ENCODE measurements at regions of chr15 and their contacts with region 1.

Region 1: DNA sequence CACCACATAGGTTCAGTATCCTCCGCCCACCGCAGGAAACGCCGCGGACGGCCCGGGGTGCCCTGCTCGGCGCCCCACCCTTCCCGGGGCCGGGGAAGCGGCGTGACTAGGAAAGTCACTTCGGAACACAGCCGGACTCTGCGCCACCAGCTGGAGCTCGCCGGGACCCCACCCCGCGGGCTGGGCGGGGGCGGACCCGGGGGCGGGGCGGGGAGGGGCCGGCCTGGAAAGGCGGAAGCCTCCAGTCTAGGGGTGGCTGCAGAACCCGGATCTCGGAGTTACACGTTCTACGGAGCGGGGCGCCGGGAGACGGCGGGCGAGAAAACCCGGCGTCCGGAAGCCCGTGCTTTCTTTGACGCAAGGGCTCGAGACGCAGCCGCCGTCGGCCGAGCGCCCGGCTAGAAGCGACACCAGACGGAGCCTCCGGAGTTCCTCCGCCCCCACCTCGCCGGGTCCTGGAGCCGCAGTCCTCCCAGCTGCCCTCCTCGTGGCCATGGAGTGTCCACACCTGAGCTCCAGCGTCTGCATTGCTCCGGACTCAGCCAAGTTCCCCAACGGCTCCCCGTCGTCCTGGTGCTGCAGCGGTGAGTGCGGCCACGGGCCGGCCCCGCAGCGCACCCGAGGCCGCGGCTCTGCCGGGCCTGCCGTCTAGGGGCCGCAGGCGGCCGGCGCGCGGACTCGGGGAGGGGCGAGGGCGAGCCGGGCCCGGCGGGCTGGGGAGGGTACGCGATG is at the start of gene USP3:
- DNase-seq: peak; percentile 86 to 98
- H3K4me3 ChIP-seq: peak within 1 kb of the TSS; percentile 93 to 94
- H3K27ac ChIP-seq: peak within 1 kb of the TSS; percentile 98 to 99
- H3K4me1 ChIP-seq: peaks cover 6 to 55% of the 10 kb centered on the region in 2 donors
- H3K27me3 ChIP-seq: no peaks in the 10 kb centered on the region
- CTCF ChIP-seq: peak; percentile 56 to 63 (median 60)
- total RNA-seq, gene USP3: 61.9 TPM

Region 2: GRCh38 chr15:63288778-63289378 is 215.5 kb before region 1 on chr15:
- intact Hi-C with region 1: loop called (anchors 5 kb)
- DNase-seq: no peak
- H3K4me3 ChIP-seq: no peak overlapping the region
- H3K27ac ChIP-seq: no peak overlapping the region
- H3K4me1 ChIP-seq: peaks cover 5 to 17% of the 10 kb centered on the region in 2 donors
- H3K27me3 ChIP-seq: no peaks in the 10 kb centered on the region
- CTCF ChIP-seq: peak; percentile 56 to 74 (median 65)

Region 3: GRCh38 chr15:63466378-63467192 is 37.8 kb before region 1 on chr15:
- intact Hi-C with region 1: no loop called
- DNase-seq: peak in 1 of 2 donors; percentile 58
- H3K4me3 ChIP-seq: no peak overlapping the region
- H3K27ac ChIP-seq: no peak overlapping the region
- H3K4me1 ChIP-seq: peaks cover 0 to 5% of the 10 kb centered on the region in 2 donors
- H3K27me3 ChIP-seq: no peaks in the 10 kb centered on the region
- CTCF ChIP-seq: peak; percentile 45 to 65 (median 47)

Region 4: DNA sequence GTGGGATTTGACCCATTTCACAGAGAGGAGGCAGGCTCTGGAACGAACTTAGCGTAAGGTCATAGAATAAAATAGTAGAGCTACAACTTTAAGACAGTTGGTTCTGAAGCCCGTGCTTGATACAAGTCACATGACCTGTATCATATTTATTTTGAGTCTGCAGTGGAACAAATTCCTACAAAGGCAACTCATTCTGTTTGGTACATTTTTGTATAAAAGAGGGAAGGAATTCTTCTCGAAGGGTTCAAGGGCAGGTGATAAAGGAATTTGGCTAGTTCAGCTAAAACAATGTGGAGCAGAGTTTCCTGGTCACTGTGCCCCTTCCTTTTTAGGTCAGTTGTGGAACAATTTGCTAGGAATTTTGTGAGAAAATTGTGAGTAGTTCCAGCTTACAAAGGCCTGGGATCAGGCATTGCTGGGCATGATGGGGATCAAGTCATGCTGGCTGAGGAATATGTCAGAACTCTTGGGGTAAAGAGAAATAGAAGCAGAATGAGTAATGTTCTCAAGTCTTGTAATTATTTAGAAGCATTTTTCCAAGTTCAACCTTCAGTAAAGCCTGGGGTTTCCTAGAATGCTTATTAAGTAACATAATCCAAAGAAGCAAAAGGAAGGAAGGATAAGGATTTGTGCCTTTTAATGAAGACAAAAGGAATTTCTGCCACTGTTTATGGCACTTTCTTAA is 19.0 kb after region 1 on chr15:
- intact Hi-C with region 1: loop called (anchors 1 kb)
- DNase-seq: no peak
- H3K4me3 ChIP-seq: peak overlapping the region in 1 of 2 donors; percentile 21
- H3K27ac ChIP-seq: peak overlapping the region; percentile 47 to 69
- H3K4me1 ChIP-seq: peaks cover 7 to 42% of the 10 kb centered on the region in 2 donors
- H3K27me3 ChIP-seq: no peaks in the 10 kb centered on the region
- CTCF ChIP-seq: no peak

Region 5: DNA sequence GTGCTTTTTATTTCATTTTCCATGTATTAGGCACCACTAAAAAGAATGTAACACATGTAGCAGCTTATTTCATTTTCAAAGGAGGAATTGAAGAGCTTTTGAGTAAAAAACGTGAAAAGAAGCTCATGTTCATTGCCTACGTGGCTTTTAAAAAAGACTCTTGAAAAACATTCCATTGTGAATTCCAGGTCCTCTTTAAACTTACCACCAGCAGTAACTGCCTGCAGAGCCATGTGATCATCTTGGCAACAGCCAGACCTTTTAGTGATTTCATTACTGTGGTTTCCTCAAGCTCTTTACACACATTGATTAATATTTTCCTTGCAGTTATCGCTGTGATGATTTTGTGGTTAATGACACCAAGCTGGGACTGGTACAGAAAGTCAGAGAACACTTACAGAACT is 49.0 kb after region 1 on chr15:
- intact Hi-C with region 1: loop called (anchors 5 kb)
- DNase-seq: no peak
- H3K4me3 ChIP-seq: peak overlapping the region in 1 of 2 donors; percentile 19
- H3K27ac ChIP-seq: peak overlapping the region; percentile 37 to 42
- H3K4me1 ChIP-seq: peaks cover 0 to 11% of the 10 kb centered on the region in 2 donors
- H3K27me3 ChIP-seq: no peaks in the 10 kb centered on the region
- CTCF ChIP-seq: no peak

Region 6: GRCh38 chr15:64460206-64460734 is 955.9 kb after region 1 on chr15 and contains the start of gene ZNF609:
- intact Hi-C with region 1: loop called (anchors 2 kb)
- DNase-seq: peak; percentile 72 to 98
- H3K4me3 ChIP-seq: peak within 1 kb of the TSS; percentile 97 to 98
- H3K27ac ChIP-seq: peak within 1 kb of the TSS; percentile 83 to 93
- H3K4me1 ChIP-seq: peaks cover 4 to 30% of the 10 kb centered on the region in 2 donors
- H3K27me3 ChIP-seq: no peaks in the 10 kb centered on the region
- CTCF ChIP-seq: no peak
- total RNA-seq, gene ZNF609: 16.0 TPM

Measured in ascending aorta (tissue), 2 donors.